ENCODE measurements at regions of chr6 and their contacts with region 1.

Region 1: GRCh38 chr6:167238146-167238693 is 52.9 kb upstream of the UNC93A start:
- DNase-seq: no peak
- ATAC-seq: no peak
- H3K4me3 ChIP-seq: no peak overlapping the region
- H3K27ac ChIP-seq: no peak overlapping the region
- H3K4me1 ChIP-seq: no peaks in the 10 kb centered on the region
- H3K27me3 ChIP-seq: no peaks in the 10 kb centered on the region

Region 2: DNA sequence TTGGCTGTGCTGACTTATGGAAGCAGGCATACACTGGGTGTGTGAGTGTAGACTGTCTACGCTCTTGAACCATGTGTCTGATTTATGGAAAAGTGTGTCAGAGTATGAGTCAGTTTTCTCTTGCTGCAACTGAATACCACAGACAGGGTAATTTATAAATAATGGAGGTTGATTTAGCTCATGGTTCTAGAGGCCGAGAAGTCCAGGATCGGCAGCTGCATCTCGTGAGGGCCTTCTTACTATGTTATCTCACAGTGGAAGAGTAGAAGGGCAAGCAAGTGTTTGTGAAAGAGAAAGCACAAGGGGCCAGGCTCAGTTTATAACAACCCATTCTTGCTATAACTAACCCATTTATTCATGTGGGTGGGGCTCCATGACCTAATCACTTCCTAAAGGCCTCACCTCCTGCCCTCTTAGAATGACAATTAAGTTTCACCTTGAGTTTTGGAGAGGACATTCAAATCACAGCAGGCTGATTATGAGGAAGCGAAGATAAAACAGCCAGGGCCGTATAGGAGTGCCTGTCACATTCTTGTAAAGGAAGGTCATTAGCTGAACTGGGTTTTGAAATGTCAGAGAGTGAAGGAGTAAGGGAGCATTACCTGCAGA is 87.2 kb before region 1 on chr6:
- intact Hi-C with region 1: no loop called
- DNase-seq: no peak
- ATAC-seq: no peak
- H3K4me3 ChIP-seq: no peak overlapping the region
- H3K27ac ChIP-seq: no peak overlapping the region
- H3K4me1 ChIP-seq: no peaks in the 10 kb centered on the region
- H3K27me3 ChIP-seq: no peaks in the 10 kb centered on the region

Region 3: DNA sequence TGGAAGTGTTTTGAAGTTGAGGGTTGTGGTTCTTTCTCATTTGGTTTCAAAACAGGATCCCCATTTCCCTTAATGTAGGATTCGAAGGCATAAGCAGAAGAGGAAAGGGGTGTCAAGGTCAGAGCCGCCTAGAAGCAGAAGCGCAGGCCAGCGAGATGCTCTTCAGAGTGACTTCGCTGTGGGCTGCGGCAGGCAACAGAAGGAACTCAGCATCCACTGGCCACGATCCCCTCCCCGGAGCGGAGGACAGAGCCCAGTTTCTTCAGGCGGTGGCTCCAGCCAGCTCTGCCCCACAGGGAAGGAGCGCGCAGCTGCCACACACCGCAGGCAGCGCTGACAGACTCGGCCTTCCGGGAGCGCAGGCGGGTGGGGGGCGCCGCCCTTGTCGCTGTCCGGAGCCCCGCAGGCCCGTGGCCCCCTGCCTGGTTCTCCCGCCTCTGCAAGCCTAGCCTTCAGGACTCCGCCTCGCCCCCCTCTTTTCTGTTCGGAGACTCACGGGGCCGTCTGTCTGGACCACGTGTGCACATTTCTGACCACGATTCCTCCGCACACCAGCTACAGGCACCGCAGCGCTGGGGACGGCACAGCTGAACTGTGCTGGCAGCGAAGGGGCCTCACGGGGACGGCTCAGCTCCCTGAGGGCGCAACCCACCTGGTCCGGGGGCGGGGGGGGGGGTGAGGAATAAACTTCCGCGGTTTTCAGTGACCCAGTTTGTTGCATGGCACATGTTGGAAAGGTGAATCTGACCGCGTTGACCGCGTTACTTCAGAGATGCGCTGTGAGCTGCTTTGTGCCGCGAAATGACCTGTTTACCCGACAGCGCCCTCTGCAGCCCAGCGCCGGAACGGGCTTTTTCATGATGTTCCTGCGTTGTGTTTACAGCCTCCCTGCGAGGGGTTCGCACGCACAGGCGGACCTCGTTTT is 112.8 kb after region 1 on chr6:
- intact Hi-C with region 1: loop called in 1 of 4 experiments (anchors 10 kb)
- DNase-seq: peak; percentile 56 to 84 (median 81)
- ATAC-seq: peak; percentile 81 to 86
- H3K4me3 ChIP-seq: peak overlapping the region; percentile 41
- H3K27ac ChIP-seq: peak overlapping the region; percentile 21
- H3K4me1 ChIP-seq: no peaks in the 10 kb centered on the region
- H3K27me3 ChIP-seq: no peaks in the 10 kb centered on the region

Region 4: GRCh38 chr6:167493976-167494697 is 255.9 kb after region 1 on chr6:
- intact Hi-C with region 1: no loop called
- DNase-seq: peak; percentile 79 to 90 (median 85)
- ATAC-seq: peak; percentile 72 to 82
- H3K4me3 ChIP-seq: no peak overlapping the region
- H3K27ac ChIP-seq: no peak overlapping the region
- H3K4me1 ChIP-seq: no peaks in the 10 kb centered on the region
- H3K27me3 ChIP-seq: no peaks in the 10 kb centered on the region